GM12878 (cell line): ENCODE measurements at regions of chr7 and their contacts with region 1.

Region 1: DNA sequence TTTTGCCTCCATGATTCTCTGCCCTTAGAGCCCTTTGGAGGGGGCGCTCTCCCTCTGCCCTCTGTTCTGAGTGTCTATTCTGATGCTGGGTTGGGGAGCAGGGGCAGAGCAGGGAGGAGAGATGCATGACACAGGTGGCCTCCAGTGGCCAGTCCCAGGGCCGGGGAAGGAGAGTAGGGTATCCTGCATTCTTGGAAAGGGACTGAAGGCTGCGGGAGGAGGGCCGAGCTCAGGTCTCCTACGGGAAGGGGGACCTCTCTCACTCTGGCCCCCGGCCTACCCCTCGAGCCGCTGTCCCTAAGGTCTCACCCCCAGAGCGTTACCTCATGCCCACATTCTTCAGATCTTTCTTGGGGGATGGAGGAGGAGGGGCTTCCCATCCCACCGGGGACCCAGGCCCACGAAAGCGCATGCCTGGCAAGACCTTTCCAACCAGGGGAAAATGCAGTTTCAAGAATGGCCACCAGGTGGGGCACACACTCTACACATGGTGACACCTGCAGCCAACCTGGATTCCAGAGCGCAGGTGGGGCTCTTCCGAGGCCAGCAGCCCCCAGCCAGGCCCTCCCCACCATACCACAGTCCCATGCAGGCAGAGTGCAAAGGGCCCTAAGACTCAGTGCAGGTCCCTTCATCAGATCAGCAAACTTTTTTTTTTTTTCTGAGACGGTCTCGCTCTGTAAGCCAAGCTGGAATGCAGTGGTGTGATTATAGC is 86.4 kb downstream of the MYL10 start:
- DNase-seq: peak; percentile 2
- ATAC-seq: peak; percentile 79
- H3K4me3 ChIP-seq: no peak overlapping the region
- H3K27ac ChIP-seq: no peak overlapping the region
- H3K4me1 ChIP-seq: no peaks in the 10 kb centered on the region
- H3K27me3 ChIP-seq: no peaks in the 10 kb centered on the region
- CTCF ChIP-seq: peak; percentile 80 to 85 (median 82)
- EP300 ChIP-seq: no peak
- POLR2A ChIP-seq: no peak
- RAD21 ChIP-seq: peak; percentile 92

Region 2: DNA sequence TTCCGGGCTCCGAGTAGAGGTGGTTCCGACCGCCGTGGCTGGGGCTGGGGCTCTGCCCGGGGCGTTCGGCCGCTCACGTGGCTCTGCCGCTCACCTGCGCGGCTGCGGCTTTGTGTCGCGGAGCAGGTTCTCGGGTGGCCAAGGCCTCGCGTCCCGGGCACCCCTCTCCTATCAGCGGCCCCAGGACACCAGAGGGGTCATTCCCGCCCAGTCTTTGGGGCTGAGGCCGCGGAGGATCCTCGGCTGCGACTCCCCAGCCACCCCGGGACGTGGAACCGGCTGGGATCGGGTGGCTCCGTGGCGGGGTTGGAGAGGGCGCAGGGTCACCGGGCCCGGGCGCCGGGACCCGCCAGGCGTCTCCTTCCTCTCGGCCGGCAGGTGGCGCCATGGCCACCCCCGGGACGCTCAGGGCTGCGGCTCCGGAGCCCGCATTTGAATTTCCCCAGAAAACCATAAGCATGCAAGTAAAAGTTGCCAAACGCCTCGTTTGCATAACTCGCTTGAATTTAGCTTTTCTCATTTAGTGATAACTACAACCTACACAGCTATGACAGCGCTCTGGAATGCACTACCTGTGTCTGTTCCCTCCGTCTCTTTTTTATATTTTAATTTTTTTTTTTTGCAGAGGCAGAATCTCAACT is 178.8 kb before region 1 on chr7:
- CTCF ChIA-PET with region 1: no interaction called
- POLR2A ChIA-PET with region 1: no interaction called
- RAD21 ChIA-PET with region 1: interaction called, 4 read pairs
- SMC1A ChIA-PET with region 1: no interaction called
- in situ Hi-C with region 1: no loop called
- intact Hi-C with region 1: loop called (anchors 2 kb)
- DNase-seq: no peak
- ATAC-seq: peak; percentile 100
- H3K4me3 ChIP-seq: no peak overlapping the region
- H3K27ac ChIP-seq: no peak overlapping the region
- H3K4me1 ChIP-seq: no peaks in the 10 kb centered on the region
- H3K27me3 ChIP-seq: peaks cover 4 to 6% of the 10 kb centered on the region in 2 experiments; a peak in 3 of 4 replicates
- CTCF ChIP-seq: peak; percentile 74 to 82 (median 74)
- EP300 ChIP-seq: no peak
- POLR2A ChIP-seq: no peak
- RAD21 ChIP-seq: peak; percentile 67

Region 3: GRCh38 chr7:101602484-101603241 is 60.0 kb after region 1 on chr7:
- CTCF ChIA-PET with region 1: interaction called, 13 read pairs
- POLR2A ChIA-PET with region 1: no interaction called
- RAD21 ChIA-PET with region 1: no interaction called
- SMC1A ChIA-PET with region 1: interaction called, 4 read pairs
- in situ Hi-C with region 1: no loop called
- intact Hi-C with region 1: no loop called
- DNase-seq: peak; percentile 0
- ATAC-seq: peak; percentile 99
- H3K4me3 ChIP-seq: no peak overlapping the region
- H3K27ac ChIP-seq: no peak overlapping the region
- H3K4me1 ChIP-seq: no peaks in the 10 kb centered on the region
- H3K27me3 ChIP-seq: no peaks in the 10 kb centered on the region; a peak in 1 of 4 replicates
- CTCF ChIP-seq: peak; percentile 82 to 92 (median 91)
- EP300 ChIP-seq: no peak
- POLR2A ChIP-seq: no peak
- RAD21 ChIP-seq: peak; percentile 77

Region 4: DNA sequence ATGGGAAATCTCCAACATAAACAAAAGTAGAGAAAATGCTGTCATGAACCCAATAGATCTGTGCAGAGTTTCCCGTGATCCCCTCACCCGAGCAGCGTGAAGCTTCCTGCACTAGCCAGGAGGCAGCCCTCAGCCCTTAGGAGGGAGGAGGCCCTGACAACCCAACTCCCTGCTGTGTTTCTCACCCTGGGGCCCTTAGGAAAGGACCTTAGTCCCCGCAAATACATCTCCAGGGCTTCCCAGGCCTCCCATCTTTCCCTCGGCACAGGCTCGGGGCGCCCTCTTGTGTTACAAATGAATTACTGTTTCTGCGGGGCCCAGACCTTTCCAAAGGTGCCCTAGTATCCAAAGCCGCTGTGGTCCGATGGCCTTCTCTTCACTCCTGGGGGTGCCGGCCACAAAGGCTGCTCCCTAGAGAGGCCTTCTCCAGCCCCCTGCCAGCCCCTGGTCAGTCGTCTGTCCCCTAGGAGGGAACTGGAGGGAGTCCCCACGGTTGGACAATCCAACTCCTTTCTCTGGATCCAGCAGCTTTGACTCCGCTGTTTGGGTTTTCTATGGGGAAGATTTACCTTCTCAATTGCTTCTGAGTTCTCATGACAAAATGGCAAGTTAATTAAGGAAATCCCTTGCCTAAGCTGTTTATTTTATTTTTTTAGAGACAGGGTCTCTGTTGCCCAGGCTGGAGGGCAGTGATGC is 694.1 kb after region 1 on chr7:
- CTCF ChIA-PET with region 1: interaction called, 5 read pairs
- POLR2A ChIA-PET with region 1: no interaction called
- RAD21 ChIA-PET with region 1: interaction called, 7 read pairs
- SMC1A ChIA-PET with region 1: no interaction called
- in situ Hi-C with region 1: no loop called
- intact Hi-C with region 1: loop called (anchors 1 kb)
- DNase-seq: no peak
- ATAC-seq: peak; percentile 91
- H3K4me3 ChIP-seq: no peak overlapping the region
- H3K27ac ChIP-seq: no peak overlapping the region
- H3K4me1 ChIP-seq: peaks cover 8% of the 10 kb centered on the region
- H3K27me3 ChIP-seq: no peaks in the 10 kb centered on the region
- CTCF ChIP-seq: peak; percentile 70 to 91 (median 77)
- EP300 ChIP-seq: no peak
- POLR2A ChIP-seq: no peak
- RAD21 ChIP-seq: peak; percentile 98

Region 5: DNA sequence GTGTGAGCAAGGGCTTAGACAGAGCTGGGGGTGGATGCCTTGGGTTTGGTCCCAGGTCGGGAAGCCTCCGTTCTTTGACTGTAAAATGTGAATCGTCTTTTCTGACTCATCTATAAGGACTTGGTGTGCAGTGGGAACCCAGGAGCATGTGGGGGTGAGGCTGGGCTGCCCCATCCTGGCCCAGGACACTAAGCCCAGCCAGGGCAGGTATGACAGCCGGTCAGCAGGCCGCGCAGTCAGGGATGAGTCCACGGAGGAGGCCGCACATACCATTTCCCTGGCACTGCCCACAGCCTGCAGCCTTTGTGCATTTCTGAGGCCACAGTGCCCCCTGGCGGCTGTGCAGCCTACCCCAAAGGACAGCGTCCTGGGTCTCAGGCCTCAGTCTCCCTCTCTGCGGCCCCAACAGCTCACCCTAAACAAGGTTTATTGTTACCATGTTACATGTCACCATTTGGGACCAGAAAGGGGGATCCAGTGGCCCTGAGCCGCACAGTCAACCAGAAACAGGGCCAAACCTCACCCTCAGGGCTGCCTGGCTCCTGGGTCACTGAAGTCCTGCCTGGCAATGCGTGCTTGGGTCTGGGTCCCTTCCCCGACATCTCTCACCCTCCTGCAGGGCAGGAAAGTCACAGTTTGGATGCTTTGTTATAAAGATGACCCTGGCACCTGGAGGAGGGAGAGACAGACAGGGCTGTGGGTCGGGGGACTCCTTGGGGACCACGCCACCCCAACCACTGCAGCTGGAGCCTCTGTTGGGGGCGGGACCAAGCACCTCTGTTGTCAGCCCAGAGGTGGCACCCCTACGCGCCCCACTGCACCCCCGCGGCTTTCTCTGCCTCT is 729.6 kb after region 1 on chr7:
- CTCF ChIA-PET with region 1: interaction called, 39 read pairs
- POLR2A ChIA-PET with region 1: no interaction called
- RAD21 ChIA-PET with region 1: interaction called, 17 read pairs
- SMC1A ChIA-PET with region 1: interaction called, 11 read pairs
- in situ Hi-C with region 1: loop called (anchors 5 kb)
- intact Hi-C with region 1: loop called (anchors 1 kb)
- DNase-seq: no peak
- ATAC-seq: peak; percentile 98
- H3K4me3 ChIP-seq: no peak overlapping the region
- H3K27ac ChIP-seq: no peak overlapping the region
- H3K4me1 ChIP-seq: no peaks in the 10 kb centered on the region
- H3K27me3 ChIP-seq: no peaks in the 10 kb centered on the region; a peak in 1 of 4 replicates
- CTCF ChIP-seq: peak; percentile 92 to 97 (median 95); a peak in 5 of 6 replicates
- EP300 ChIP-seq: no peak
- POLR2A ChIP-seq: no peak
- RAD21 ChIP-seq: peak; percentile 96

Region 6: GRCh38 chr7:102390697-102391484 is 848.2 kb after region 1 on chr7:
- CTCF ChIA-PET with region 1: no interaction called
- POLR2A ChIA-PET with region 1: no interaction called
- RAD21 ChIA-PET with region 1: no interaction called
- SMC1A ChIA-PET with region 1: no interaction called
- in situ Hi-C with region 1: loop called (anchors 5 kb)
- intact Hi-C with region 1: loop called (anchors 10 kb)
- DNase-seq: no peak
- ATAC-seq: peak; percentile 92
- H3K4me3 ChIP-seq: no peak overlapping the region
- H3K27ac ChIP-seq: no peak overlapping the region
- H3K4me1 ChIP-seq: peaks cover 16% of the 10 kb centered on the region
- H3K27me3 ChIP-seq: no peaks in the 10 kb centered on the region
- CTCF ChIP-seq: peak; percentile 89 to 93 (median 91)
- EP300 ChIP-seq: no peak
- POLR2A ChIP-seq: no peak; the same call in 1 of the 2 replicates
- RAD21 ChIP-seq: peak; percentile 91

Region 7: GRCh38 chr7:102396027-102397019 is 853.6 kb after region 1 on chr7 and contains the start of gene PRKRIP1:
- CTCF ChIA-PET with region 1: no interaction called
- POLR2A ChIA-PET with region 1: no interaction called
- RAD21 ChIA-PET with region 1: no interaction called
- SMC1A ChIA-PET with region 1: no interaction called
- in situ Hi-C with region 1: loop called (anchors 5 kb)
- intact Hi-C with region 1: loop called (anchors 10 kb)
- DNase-seq: peak; percentile 96
- ATAC-seq: peak; percentile 99
- H3K4me3 ChIP-seq: peak within 1 kb of the TSS; percentile 97
- H3K27ac ChIP-seq: peak within 1 kb of the TSS; percentile 88
- H3K4me1 ChIP-seq: peaks cover 10% of the 10 kb centered on the region
- H3K27me3 ChIP-seq: no peaks in the 10 kb centered on the region
- CTCF ChIP-seq: no peak
- EP300 ChIP-seq: peak; percentile 17 to 62; a peak in 1 of 4 replicates
- POLR2A ChIP-seq: peak; percentile 86
- RAD21 ChIP-seq: no peak
- polyA plus RNA-seq, gene PRKRIP1: 17.0 to 18.3 TPM